Activated CD4-positive, alpha-beta T cell treated with anti-CD3 and anti-CD28 coated beads, Interleukin-2, amount 10 ng/mL, durations not matched to agents 7 days and 5 days (primary cell): ENCODE measurements at regions of chr7 and their contacts with region 1.

Region 1: DNA sequence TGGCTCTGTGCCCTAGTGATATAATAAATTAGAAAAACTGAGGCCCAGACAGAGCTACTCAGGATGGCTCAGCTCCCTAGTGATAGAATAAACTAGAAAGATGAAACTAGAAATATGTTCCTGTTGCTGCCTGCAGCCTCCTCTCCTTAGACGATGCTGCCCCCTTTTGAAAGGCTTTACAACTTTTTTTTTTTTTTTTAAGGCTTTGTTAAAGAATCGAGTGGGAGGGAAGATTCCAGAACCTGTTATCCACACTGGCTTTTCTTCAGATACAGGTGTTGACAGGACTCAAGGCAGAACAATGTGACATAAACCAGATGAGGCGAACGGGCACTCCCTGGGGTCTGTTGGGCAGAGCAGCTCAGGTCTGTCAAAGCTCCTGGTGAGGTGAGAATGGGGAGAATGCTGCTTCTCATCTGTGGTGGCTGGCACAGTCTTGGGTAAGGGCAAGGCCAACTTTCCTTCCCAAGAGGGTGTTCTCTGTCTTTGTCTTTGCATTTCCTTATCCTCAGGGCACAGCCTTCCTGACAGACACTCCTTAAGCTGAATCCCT is 175.1 kb downstream of the COBL start:
- DNase-seq: peak; percentile 20
- H3K4me3 Mint-ChIP-seq: no peak overlapping the region
- H3K27ac Mint-ChIP-seq: no peak overlapping the region
- H3K4me1 Mint-ChIP-seq: peaks cover 28% of the 10 kb centered on the region
- H3K27me3 Mint-ChIP-seq: no peaks in the 10 kb centered on the region

Region 2: GRCh38 chr7:50092579-50093491 is 1048.7 kb before region 1 on chr7 and contains the start of gene ZPBP:
- CTCF ChIA-PET with region 1: interaction called, 12 read pairs
- POLR2A ChIA-PET with region 1: no interaction called
- DNase-seq: peak; percentile 70
- H3K4me3 Mint-ChIP-seq: peak within 1 kb of the TSS; percentile 76
- H3K27ac Mint-ChIP-seq: peak within 1 kb of the TSS; percentile 83
- H3K4me1 Mint-ChIP-seq: peaks cover 12% of the 10 kb centered on the region
- H3K27me3 Mint-ChIP-seq: peaks cover 24% of the 10 kb centered on the region
- total RNA-seq, gene ZPBP: not detected

Region 3: DNA sequence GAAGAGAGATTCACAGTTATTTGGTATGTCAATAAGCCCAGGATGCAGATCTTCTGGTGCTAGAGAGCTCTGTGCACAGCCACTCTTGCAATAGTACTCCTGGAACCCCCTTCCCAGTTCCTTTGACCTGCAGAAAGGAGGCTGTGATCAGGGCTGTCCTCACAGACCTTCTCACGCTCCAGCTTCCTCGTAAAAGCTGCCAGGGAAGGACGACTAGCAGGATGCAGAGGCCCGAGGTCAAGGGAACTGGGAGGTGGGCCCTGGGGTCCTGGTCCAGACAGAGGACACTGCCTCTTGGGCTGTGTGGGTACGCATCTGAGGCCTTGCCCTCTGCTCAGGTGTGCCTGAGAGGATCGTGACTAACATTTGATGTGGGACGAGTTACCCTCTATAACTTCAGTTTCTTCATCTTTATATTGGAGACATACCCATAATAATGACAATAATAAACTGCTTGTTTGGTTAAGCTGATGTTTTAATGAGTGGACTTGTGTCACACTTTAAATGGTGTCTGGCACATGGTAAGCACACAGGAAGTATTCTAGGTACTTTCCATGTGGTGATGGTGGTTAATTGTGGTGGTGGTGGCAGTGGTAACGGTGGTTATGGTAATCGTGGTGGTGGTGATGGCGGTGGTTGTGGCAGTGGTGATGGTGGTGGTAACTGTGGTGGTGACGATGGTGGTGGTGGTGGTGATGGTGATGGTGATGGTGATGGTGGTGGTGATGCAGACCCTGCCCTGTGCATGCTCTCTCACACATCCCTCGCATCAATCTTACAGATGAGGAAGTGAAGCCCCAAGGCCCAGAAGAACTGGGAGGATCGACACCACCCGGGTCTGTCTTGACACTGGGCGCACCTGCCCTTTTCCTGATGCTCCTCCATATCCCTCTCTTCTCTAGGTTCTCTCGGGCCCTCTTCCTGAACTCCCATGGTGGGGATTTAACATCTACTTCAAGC is 123.7 kb before region 1 on chr7:
- CTCF ChIA-PET with region 1: no interaction called
- POLR2A ChIA-PET with region 1: no interaction called
- DNase-seq: no peak
- H3K4me3 Mint-ChIP-seq: no peak overlapping the region
- H3K27ac Mint-ChIP-seq: no peak overlapping the region
- H3K4me1 Mint-ChIP-seq: peaks cover 4% of the 10 kb centered on the region
- H3K27me3 Mint-ChIP-seq: peaks cover 2% of the 10 kb centered on the region

Region 4: GRCh38 chr7:51126324-51126723 is 15.2 kb before region 1 on chr7:
- CTCF ChIA-PET with region 1: interaction called, 10 read pairs
- POLR2A ChIA-PET with region 1: no interaction called
- DNase-seq: no peak
- H3K4me3 Mint-ChIP-seq: no peak overlapping the region
- H3K27ac Mint-ChIP-seq: no peak overlapping the region
- H3K4me1 Mint-ChIP-seq: peaks cover 26% of the 10 kb centered on the region
- H3K27me3 Mint-ChIP-seq: no peaks in the 10 kb centered on the region

Region 5: DNA sequence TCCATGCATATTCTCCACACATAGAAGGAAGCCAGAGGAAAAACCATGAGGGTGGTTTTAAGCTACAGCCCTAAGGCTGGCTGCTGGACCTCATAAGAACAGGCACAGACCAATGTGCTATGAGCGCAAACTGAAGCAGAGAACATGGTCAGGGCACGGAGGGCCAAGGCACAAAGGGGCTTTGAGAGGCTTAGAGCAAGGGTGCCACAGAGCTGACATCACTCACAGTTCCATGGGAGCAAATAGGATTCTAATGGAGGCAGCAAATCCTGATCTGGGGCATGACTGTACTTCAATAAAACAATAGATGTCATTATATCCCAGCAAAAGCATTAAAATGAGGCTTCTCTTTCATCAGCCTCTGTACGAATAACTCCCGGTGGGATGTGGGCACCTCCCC is 12.7 kb after region 1 on chr7:
- CTCF ChIA-PET with region 1: interaction called, 28 read pairs
- POLR2A ChIA-PET with region 1: no interaction called
- DNase-seq: no peak
- H3K4me3 Mint-ChIP-seq: no peak overlapping the region
- H3K27ac Mint-ChIP-seq: no peak overlapping the region
- H3K4me1 Mint-ChIP-seq: no peaks in the 10 kb centered on the region
- H3K27me3 Mint-ChIP-seq: peaks cover 3% of the 10 kb centered on the region

Region 6: DNA sequence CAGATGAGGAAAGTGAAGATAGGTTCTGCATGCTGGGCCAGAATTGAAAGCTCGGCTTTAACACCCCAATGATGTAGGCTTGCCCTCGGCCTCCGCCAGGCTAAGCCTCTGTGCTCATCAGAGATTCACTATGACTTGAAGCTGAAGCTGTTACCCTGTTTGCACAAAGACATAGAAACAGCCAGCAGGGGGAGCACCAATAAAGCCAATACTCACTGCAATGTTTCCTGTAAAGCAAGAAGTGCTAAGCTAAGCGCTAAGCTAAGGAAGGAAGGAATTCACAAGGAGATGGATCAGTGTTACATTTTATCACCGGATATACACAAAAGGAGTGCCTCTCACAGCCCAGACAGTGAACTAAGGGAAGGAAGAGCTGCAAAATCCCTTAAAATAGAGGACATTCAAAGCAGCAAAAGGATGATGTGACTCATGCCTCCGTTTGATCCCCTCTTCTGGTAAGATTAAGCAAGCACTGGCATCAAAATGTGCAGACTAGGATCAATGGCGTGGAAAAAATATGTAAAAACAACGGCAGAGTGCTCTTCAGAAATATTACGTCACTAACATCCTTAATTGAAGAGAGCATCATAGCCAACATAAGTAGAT is 21.3 kb after region 1 on chr7:
- CTCF ChIA-PET with region 1: interaction called, 14 read pairs
- POLR2A ChIA-PET with region 1: no interaction called
- DNase-seq: peak; percentile 82
- H3K4me3 Mint-ChIP-seq: no peak overlapping the region
- H3K27ac Mint-ChIP-seq: no peak overlapping the region
- H3K4me1 Mint-ChIP-seq: peaks cover 3% of the 10 kb centered on the region
- H3K27me3 Mint-ChIP-seq: peaks cover 29% of the 10 kb centered on the region